OCI-LY7 (cell line): ENCODE measurements at regions of chr1 and their contacts with region 1.

Region 1: DNA sequence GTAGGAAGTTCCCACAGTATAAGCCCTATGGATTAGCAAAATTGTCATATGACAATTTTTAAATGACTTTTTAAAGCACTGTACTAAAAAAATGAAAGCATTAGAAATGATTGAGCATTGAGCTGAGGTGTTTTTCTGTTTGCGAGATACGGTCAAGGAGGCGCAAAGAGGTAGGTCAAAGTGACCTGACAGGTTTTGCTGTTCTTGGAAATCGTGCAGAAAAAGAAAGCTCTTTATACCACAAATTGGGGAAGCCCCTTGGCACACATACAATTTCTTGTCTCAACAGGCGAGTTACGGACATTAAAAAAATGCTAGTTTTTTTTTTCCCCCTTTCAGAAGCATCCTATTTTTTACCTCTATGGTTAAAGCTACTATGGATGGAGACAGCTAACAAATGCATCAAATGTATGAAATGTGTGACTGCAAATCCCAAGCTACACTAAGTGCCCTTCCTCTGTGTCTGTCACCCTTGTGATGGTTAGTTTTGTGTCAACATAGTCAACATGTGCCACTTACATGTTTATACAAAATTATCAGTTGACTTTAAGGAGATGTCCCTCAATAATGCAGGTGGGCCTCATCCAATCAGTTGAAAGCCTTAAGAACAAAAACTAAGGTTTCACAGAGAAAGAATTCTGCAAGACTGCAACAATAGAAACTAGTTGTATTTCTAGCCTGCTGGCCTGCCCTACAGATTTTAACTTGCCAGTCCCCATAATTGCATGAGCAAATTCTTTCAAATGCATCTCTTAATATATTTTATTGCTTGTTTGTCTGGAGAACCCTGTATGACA is 29.3 kb downstream of the CRYZ start:
- DNase-seq: no peak
- H3K4me3 ChIP-seq: no peak overlapping the region
- H3K27ac ChIP-seq: no peak overlapping the region
- H3K4me1 ChIP-seq: peaks cover 8% of the 10 kb centered on the region
- CTCF ChIP-seq: no peak

Region 2: DNA sequence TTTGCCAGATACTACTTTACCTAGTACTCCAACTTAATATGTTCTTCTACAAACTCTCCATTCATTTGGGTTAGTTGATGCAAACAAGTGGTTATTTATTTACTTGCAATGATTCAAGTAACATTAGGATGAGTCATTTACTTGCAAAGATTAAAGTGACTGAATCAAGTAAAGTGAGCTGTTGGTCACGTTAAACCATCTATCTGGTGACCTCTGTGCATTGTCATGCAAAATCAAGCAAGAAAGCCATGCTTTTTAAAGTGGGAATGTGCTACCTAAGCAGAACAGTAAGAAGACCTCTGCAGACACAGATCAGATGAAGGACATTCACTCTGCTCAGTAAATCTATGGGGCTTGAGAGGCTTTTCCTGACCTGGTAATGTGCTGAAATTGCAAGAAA is 760.3 kb before region 1 on chr1:
- CTCF ChIA-PET with region 1: no interaction called
- POLR2A ChIA-PET with region 1: no interaction called
- intact Hi-C with region 1: no loop called
- DNase-seq: no peak
- H3K4me3 ChIP-seq: no peak overlapping the region
- H3K27ac ChIP-seq: no peak overlapping the region
- H3K4me1 ChIP-seq: no peaks in the 10 kb centered on the region
- CTCF ChIP-seq: no peak

Region 3: DNA sequence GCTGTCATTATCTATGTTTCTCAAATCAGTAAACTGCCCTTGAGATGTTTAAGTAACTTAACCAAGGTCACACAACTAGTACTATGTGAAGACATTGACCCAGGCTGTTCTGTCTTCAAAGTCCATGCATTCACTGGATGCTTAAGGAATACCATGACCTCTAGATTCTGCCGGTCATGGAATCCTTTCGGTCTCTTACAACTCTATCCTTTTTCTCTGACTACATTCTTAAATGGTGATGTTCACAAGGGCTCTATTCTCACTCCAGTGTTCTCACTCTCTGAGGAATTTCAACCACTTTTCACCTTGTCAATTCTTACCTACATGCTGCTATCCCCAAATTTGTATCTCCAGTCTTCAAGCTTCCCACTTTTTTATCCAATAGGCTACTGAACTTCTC is 14.0 kb after region 1 on chr1:
- CTCF ChIA-PET with region 1: no interaction called
- POLR2A ChIA-PET with region 1: interaction called, 11 read pairs
- intact Hi-C with region 1: no loop called
- DNase-seq: no peak
- H3K4me3 ChIP-seq: no peak overlapping the region
- H3K27ac ChIP-seq: no peak overlapping the region
- H3K4me1 ChIP-seq: no peaks in the 10 kb centered on the region
- CTCF ChIP-seq: no peak

Region 4: GRCh38 chr1:74771913-74772515 is 68.4 kb after region 1 on chr1:
- CTCF ChIA-PET with region 1: no interaction called
- POLR2A ChIA-PET with region 1: no interaction called
- intact Hi-C with region 1: no loop called
- DNase-seq: peak; percentile 47
- H3K4me3 ChIP-seq: no peak overlapping the region
- H3K27ac ChIP-seq: no peak overlapping the region
- H3K4me1 ChIP-seq: no peaks in the 10 kb centered on the region
- CTCF ChIP-seq: peak; percentile 86